A673 (cell line): ENCODE measurements at regions of chr4 and their contacts with region 1.

Region 1: GRCh38 chr4:25180524-25181131 is 20.4 kb upstream of the SEPSECS start:
- DNase-seq: peak; percentile 69
- H3K4me3 ChIP-seq: no peak overlapping the region
- H3K27ac ChIP-seq: no peak overlapping the region
- H3K4me1 ChIP-seq: no peaks in the 10 kb centered on the region
- H3K27me3 ChIP-seq: no peaks in the 10 kb centered on the region
- CTCF ChIP-seq: peak; percentile 87

Region 2: DNA sequence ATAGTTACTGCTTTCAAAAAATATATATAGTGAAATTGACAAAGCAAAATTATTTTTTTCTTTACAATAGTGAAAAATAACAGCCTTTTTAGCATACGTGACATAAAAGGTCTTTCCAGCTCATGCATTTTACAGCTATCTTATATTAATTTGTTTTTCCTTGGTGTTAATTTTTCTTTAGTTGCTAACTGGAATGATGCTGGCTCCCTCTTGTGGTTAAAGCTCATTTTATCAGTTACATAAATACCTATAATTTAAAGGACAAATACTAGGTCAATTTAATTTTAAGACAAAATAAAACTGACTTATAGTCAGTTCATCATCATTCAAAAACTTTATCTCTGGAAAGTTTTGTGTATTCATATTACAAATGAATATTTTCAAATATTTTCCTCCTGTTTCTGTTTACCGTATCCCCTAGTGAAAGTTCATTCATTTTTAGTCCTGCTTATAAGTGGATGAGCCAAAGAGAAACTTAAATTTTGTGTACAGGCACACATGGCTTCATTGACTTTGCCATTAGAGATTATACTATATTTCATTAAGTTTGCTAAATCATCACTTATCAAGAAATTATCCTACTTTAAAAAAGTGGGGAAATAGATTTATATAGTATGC is 186.5 kb after region 1 on chr4:
- CTCF ChIA-PET with region 1: interaction called, 4 read pairs
- POLR2A ChIA-PET with region 1: no interaction called
- intact Hi-C with region 1: loop called (anchors 1 kb)
- DNase-seq: peak; percentile 57
- H3K4me3 ChIP-seq: no peak overlapping the region
- H3K27ac ChIP-seq: no peak overlapping the region
- H3K4me1 ChIP-seq: no peaks in the 10 kb centered on the region
- H3K27me3 ChIP-seq: no peaks in the 10 kb centered on the region
- CTCF ChIP-seq: peak; percentile 75

Region 3: DNA sequence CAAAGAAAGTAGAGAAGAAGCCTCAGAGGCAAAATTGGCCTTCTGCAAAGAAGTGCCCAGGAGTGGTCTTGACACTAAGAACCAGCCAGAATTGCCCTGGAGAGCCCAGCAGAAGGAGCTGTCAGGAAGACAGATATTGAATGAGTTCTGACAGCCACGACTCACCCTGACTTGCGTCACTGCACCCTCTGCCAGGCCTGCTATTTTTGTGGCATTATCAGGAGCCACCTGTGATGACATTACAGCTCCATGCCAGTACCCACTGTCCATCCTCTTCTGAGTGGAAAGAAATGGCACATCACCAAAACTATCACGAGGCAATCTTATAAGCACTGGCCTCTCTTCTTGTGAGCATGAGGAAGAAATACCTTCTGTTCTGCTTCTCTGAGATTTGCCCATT is 801.1 kb after region 1 on chr4:
- CTCF ChIA-PET with region 1: no interaction called
- POLR2A ChIA-PET with region 1: no interaction called
- intact Hi-C with region 1: no loop called
- DNase-seq: no peak
- H3K4me3 ChIP-seq: no peak overlapping the region
- H3K27ac ChIP-seq: no peak overlapping the region
- H3K4me1 ChIP-seq: no peaks in the 10 kb centered on the region
- H3K27me3 ChIP-seq: no peaks in the 10 kb centered on the region
- CTCF ChIP-seq: no peak